CD14-positive monocyte (primary cell): ENCODE measurements at regions of chr2 and their contacts with region 1.

Region 1: GRCh38 chr2:96265840-96266679 is at the starts of genes CIAO1 and TMEM127:
- DNase-seq: peak; percentile 97 to 98 (median 98)
- H3K4me3 ChIP-seq: peak within 1 kb of the TSS; percentile 95 to 98 (median 98)
- H3K4me3 Mint-ChIP-seq: peak within 1 kb of the TSS; percentile 90 to 99
- H3K27ac ChIP-seq: peak within 1 kb of the TSS; percentile 88 to 97
- H3K27ac Mint-ChIP-seq: peak within 1 kb of the TSS; percentile 85 to 98 (median 94)
- H3K4me1 ChIP-seq: peaks cover 39 to 53% of the 10 kb centered on the region in 2 donors
- H3K4me1 Mint-ChIP-seq: peaks cover 43% of the 10 kb centered on the region
- H3K27me3 ChIP-seq: no peaks in the 10 kb centered on the region
- H3K27me3 Mint-ChIP-seq: peaks cover 0 to 3% (median 0%) of the 10 kb centered on the region in 3 donors
- CTCF ChIP-seq: peak; percentile 20
- polyA plus RNA-seq, gene CIAO1: 73.7 to 93.8 (median 89.4) TPM
- polyA plus RNA-seq, gene TMEM127: 72.3 to 107 (median 78.5) TPM

Region 2: DNA sequence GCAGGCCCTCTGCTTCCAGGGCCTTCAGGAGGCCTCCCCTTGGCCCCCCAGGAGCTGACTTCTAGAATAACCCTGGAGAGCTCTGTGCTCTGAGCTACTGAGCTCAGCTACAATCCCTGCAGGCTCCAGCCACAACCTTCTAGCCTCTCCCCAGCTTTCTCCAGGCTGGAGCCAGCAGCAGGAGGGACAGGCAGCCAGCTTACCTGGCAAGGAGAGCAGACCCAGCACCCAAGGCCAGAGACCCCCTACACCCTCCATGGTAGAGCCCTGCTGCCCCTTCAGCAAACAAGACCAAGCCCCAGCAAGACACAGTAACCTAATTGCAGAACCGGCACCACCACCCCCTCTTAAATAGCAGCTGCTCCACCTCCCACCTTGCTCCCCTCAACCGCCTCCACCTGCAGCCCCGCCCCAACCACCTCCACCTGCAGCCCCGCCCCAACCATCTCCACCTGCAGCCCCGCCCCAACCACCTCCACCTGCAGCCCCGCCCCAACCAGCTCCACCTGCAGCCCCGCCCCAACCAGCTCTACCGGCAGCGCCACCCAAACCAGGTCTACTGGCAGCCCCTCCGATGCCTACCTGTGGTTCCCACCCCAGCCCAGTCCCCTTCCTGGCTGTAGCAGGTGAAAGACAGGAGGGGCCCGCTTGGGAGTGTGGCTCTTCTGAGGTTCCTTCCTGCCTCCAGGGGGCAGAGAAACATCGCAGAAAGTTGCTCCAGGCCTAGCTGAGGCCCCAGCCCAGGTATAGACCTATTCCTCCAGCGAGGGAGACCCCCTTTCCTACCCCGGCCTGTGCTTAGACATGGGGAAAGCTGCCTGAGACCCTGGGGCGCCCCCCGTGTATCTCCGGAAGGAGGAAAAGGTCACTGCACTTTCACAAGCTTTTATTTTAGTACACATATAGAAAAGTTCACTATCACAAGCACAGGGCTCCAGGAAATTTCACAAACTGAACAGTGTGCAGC is 127.6 kb before region 1 on chr2 and contains the start of gene ASTL:
- intact Hi-C with region 1: loop called (anchors 2 to 10 kb)
- DNase-seq: peak; percentile 37 to 56 (median 54)
- H3K4me3 ChIP-seq: no peak within 1 kb of the TSS
- H3K4me3 Mint-ChIP-seq: no peak within 1 kb of the TSS
- H3K27ac ChIP-seq: no peak within 1 kb of the TSS
- H3K27ac Mint-ChIP-seq: peak within 1 kb of the TSS in 1 of 7 donors; percentile 6
- H3K4me1 ChIP-seq: peaks cover 0 to 4% of the 10 kb centered on the region in 2 donors
- H3K4me1 Mint-ChIP-seq: peaks cover 13% of the 10 kb centered on the region
- H3K27me3 ChIP-seq: no peaks in the 10 kb centered on the region
- H3K27me3 Mint-ChIP-seq: peaks cover 0 to 4% (median 3%) of the 10 kb centered on the region in 3 donors
- CTCF ChIP-seq: peak; percentile 52
- polyA plus RNA-seq, gene ASTL: 0.71 TPM in 1 of 3 donors, not detected in the others

Region 3: GRCh38 chr2:96145036-96145847 is 120.8 kb before region 1 on chr2 and contains the start of gene DUSP2:
- intact Hi-C with region 1: loop called in 1 of 2 experiments (anchors 10 kb)
- DNase-seq: peak; percentile 86 to 93 (median 92)
- H3K4me3 ChIP-seq: peak within 1 kb of the TSS; percentile 40 to 93 (median 64)
- H3K4me3 Mint-ChIP-seq: peak within 1 kb of the TSS; percentile 91 to 96
- H3K27ac ChIP-seq: peak within 1 kb of the TSS; percentile 95 to 98
- H3K27ac Mint-ChIP-seq: peak within 1 kb of the TSS; percentile 95 to 99 (median 98)
- H3K4me1 ChIP-seq: peaks cover 49 to 59% of the 10 kb centered on the region in 2 donors
- H3K4me1 Mint-ChIP-seq: peaks cover 60% of the 10 kb centered on the region
- H3K27me3 ChIP-seq: no peaks in the 10 kb centered on the region
- H3K27me3 Mint-ChIP-seq: peaks cover 0 to 13% (median 3%) of the 10 kb centered on the region in 3 donors
- CTCF ChIP-seq: no peak
- polyA plus RNA-seq, gene DUSP2: 48.4 to 392 (median 66.1) TPM

Region 4: DNA sequence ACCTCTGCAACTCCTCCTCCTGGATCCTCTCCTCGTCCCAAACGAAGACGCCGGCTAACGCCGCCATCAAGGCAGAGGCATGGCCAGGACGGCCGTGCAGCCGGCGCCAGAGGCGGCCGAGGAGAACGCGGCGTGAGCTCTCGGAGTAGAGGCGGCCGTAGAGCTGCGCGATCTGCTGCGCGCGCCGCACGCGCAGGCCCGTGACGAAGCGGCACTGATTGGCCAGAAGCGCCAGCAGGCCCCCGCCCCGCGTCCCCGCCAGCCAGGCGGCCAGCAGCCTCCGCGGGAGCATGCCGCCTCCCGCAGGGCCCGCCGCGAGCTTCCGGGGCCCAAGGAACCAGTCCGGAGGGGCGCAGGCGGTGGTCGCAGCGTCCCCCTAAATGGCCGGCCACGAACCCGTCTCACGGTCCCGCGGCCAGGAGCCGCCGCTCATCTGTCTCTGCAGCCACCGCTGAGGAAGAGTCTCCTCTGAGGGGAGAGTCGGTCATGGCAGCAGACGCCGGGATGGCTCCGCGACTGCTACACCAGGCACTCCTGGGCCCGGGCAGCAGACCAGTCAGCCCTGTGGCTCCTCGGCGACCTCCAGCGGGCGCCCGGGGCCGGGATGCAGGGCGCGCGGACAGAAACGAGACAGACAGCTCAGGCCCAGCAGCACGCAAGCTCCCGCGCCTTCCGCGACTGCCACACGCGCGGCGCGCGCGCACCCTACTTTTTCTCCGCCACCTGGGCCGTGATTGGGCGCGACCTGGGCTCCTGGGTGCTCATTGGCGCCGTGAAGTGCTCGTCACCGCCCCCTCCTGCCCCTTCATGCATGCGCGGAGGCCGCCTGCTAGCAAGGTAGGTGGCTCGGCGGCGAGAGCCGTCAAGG is 57.7 kb before region 1 on chr2 and contains the start of gene STARD7:
- intact Hi-C with region 1: loop called (anchors 2 kb)
- DNase-seq: peak; percentile 91 to 95 (median 95)
- H3K4me3 ChIP-seq: peak within 1 kb of the TSS; percentile 48 to 78 (median 62)
- H3K4me3 Mint-ChIP-seq: peak within 1 kb of the TSS; percentile 94 to 95
- H3K27ac ChIP-seq: peak within 1 kb of the TSS; percentile 73 to 78
- H3K27ac Mint-ChIP-seq: peak within 1 kb of the TSS; percentile 85 to 97 (median 93)
- H3K4me1 ChIP-seq: peaks cover 56 to 57% of the 10 kb centered on the region in 2 donors
- H3K4me1 Mint-ChIP-seq: peaks cover 57% of the 10 kb centered on the region
- H3K27me3 ChIP-seq: no peaks in the 10 kb centered on the region
- H3K27me3 Mint-ChIP-seq: peaks cover 0 to 1% (median 0%) of the 10 kb centered on the region in 3 donors
- CTCF ChIP-seq: peak; percentile 10
- polyA plus RNA-seq, gene STARD7: 38.0 to 179 (median 172) TPM

Region 5: GRCh38 chr2:96241900-96242611 is 24.0 kb before region 1 on chr2:
- intact Hi-C with region 1: loop called in 1 of 2 experiments (anchors 2 kb)
- DNase-seq: peak; percentile 92 to 97 (median 96)
- H3K4me3 ChIP-seq: peak overlapping the region; percentile 0 to 63 (median 24)
- H3K4me3 Mint-ChIP-seq: peak overlapping the region; percentile 60 to 83
- H3K27ac ChIP-seq: peak overlapping the region; percentile 78 to 97
- H3K27ac Mint-ChIP-seq: peak overlapping the region; percentile 98 to 100 (median 98)
- H3K4me1 ChIP-seq: peaks cover 73 to 79% of the 10 kb centered on the region in 2 donors
- H3K4me1 Mint-ChIP-seq: peaks cover 74% of the 10 kb centered on the region
- H3K27me3 ChIP-seq: no peaks in the 10 kb centered on the region
- H3K27me3 Mint-ChIP-seq: no peaks in the 10 kb centered on the region
- CTCF ChIP-seq: no peak

Region 6: GRCh38 chr2:96305091-96305978 is 39.3 kb after region 1 on chr2 and contains the start of gene SNRNP200:
- intact Hi-C with region 1: loop called (anchors 5 kb)
- DNase-seq: peak; percentile 81 to 86 (median 83)
- H3K4me3 ChIP-seq: peak within 1 kb of the TSS; percentile 83 to 97 (median 93)
- H3K4me3 Mint-ChIP-seq: peak within 1 kb of the TSS; percentile 98 to 99
- H3K27ac ChIP-seq: peak within 1 kb of the TSS; percentile 57 to 90
- H3K27ac Mint-ChIP-seq: peak within 1 kb of the TSS; percentile 93 to 98 (median 97)
- H3K4me1 ChIP-seq: peaks cover 13 to 19% of the 10 kb centered on the region in 2 donors
- H3K4me1 Mint-ChIP-seq: peaks cover 32% of the 10 kb centered on the region
- H3K27me3 ChIP-seq: no peaks in the 10 kb centered on the region
- H3K27me3 Mint-ChIP-seq: peaks cover 0 to 3% (median 0%) of the 10 kb centered on the region in 3 donors
- CTCF ChIP-seq: no peak
- polyA plus RNA-seq, gene SNRNP200: 27.2 to 122 (median 36.1) TPM

Region 7: GRCh38 chr2:96618604-96619283 is 352.7 kb after region 1 on chr2:
- intact Hi-C with region 1: no loop called
- DNase-seq: peak; percentile 35 to 57 (median 43)
- H3K4me3 ChIP-seq: peak overlapping the region in 1 of 3 experiments; percentile 76
- H3K4me3 Mint-ChIP-seq: no peak overlapping the region
- H3K27ac ChIP-seq: peak overlapping the region; percentile 83 to 87
- H3K27ac Mint-ChIP-seq: peak overlapping the region; percentile 81 to 97 (median 90)
- H3K4me1 ChIP-seq: peaks cover 40 to 50% of the 10 kb centered on the region in 2 donors
- H3K4me1 Mint-ChIP-seq: peaks cover 49% of the 10 kb centered on the region
- H3K27me3 ChIP-seq: no peaks in the 10 kb centered on the region
- H3K27me3 Mint-ChIP-seq: peaks cover 0 to 2% (median 0%) of the 10 kb centered on the region in 3 donors
- CTCF ChIP-seq: no peak